BJ (cell line): ENCODE measurements at regions of chr20 and their contacts with region 1.

Region 1: DNA sequence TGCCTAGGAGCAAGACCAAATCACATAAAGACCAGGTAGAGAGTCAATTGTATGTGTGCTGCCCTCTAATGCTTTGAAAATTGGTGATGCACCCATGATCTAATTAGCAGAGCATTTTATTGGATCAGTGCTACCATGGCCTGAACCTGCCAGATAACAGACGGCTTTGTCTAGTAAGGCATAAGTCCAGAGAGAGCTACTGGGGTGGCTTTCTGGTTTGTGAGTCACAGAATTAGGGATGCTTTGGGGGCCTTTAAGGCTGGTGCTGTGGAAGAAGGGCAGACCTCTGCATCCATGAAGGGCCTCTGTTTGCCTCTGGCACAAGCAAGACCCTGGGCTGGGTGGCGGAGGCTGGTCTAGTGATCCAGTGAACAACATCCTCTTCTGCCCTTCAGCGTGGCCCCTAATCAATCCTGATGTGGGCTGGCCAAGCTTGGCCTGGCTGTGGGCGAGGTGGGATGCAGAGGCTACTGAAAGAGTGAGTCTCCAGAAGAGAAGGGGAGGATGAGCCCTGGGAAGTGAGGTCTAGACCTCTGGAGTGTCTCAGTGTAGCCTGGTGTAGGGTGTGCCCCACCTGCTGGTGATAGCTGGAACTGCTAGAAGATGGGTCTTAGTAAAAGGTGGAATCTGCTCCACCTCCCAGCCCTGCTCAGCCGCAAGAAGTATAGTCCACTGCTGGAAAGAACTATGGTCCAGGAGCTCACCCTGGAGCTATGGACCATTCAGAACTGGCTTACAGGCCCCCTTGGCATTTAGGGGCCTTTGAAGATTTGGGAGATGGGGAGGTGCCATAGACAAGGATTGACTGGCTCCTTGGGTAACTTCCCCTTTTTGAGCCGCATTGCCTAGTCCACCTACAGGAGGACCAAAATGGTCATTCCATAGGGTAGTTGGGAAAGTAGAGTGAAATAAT is 36.7 kb upstream of the AAR2 start:
- DNase-seq: peak; percentile 14
- H3K4me3 ChIP-seq: no peak overlapping the region
- H3K27me3 ChIP-seq: no peaks in the 10 kb centered on the region
- CTCF ChIP-seq: peak; percentile 97

Region 2: GRCh38 chr20:36004045-36004444 is 195.6 kb before region 1 on chr20:
- CTCF ChIA-PET with region 1: no interaction called
- POLR2A ChIA-PET with region 1: no interaction called
- DNase-seq: no peak
- H3K4me3 ChIP-seq: no peak overlapping the region
- H3K27me3 ChIP-seq: no peaks in the 10 kb centered on the region
- CTCF ChIP-seq: no peak

Region 3: GRCh38 chr20:36121981-36122930 is 77.3 kb before region 1 on chr20:
- CTCF ChIA-PET with region 1: no interaction called
- POLR2A ChIA-PET with region 1: no interaction called
- DNase-seq: no peak
- H3K4me3 ChIP-seq: no peak overlapping the region
- H3K27me3 ChIP-seq: no peaks in the 10 kb centered on the region
- CTCF ChIP-seq: no peak

Region 4: DNA sequence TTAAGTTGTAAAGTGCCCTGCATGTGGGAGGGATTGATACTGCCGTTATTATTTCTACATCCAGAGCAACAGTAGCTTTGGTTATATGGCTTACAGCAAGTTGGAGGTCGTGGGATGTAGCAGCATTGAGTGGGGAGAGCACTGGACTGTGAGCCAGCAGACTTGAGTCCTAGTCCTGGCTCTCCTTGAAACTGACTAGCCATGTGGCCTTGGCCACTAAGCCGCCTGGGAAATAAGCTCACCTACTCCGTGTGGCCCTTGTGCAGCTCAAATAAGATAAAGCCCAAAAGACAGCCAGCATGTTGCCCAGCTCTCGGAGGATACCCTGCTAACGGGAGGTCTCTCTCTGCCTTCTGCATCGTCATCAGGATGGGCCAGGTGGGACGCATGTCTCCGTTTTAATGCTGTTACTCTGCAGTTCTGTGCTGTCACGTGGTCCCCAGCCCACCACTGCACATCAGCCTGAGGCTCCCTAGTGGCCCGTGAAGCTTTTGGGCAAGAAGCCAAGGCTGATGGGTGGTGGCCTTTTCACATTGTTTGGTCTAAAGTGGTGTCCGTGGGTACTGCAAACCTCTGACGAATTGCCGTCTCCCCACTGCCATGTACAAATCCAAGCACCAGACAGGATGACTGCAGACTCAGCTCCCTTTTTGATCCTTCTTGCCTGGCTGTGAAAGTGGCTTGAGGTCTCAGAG is 37.2 kb before region 1 on chr20:
- CTCF ChIA-PET with region 1: interaction called, 84 read pairs
- POLR2A ChIA-PET with region 1: interaction called, 3 read pairs
- DNase-seq: no peak
- H3K4me3 ChIP-seq: no peak overlapping the region
- H3K27me3 ChIP-seq: no peaks in the 10 kb centered on the region
- CTCF ChIP-seq: no peak

Region 5: DNA sequence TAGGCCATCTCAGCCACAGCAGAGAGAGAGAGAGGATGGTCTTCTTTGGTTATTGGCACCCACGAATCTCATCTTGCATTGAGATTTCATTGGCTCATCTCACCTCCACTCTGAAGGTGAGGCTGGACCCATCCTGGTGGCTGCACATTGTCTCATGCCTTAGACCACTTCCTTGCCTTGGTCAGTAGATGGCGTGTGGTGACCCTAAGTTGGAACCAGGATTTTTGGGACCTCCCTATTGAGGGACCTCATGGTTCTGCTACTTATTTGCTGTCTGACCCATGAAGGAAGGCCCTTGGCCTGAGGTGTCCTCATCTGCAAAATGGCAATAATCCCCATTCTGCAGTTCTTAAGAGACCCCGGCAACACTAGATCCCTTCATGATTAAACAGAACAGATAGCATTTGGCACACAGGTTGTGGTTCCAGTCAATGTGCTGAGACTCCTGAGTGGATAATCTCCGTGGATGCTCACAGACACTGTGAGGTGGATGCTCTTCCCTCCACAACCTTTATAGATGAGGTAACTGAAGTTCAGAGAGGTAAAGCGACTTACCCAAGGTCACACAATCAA is 15.2 kb after region 1 on chr20:
- CTCF ChIA-PET with region 1: interaction called, 34 read pairs
- POLR2A ChIA-PET with region 1: no interaction called
- DNase-seq: no peak
- H3K4me3 ChIP-seq: no peak overlapping the region
- H3K27me3 ChIP-seq: no peaks in the 10 kb centered on the region
- CTCF ChIP-seq: peak; percentile 59